ENCODE measurements at regions of chr14 and their contacts with region 1.

Region 1: DNA sequence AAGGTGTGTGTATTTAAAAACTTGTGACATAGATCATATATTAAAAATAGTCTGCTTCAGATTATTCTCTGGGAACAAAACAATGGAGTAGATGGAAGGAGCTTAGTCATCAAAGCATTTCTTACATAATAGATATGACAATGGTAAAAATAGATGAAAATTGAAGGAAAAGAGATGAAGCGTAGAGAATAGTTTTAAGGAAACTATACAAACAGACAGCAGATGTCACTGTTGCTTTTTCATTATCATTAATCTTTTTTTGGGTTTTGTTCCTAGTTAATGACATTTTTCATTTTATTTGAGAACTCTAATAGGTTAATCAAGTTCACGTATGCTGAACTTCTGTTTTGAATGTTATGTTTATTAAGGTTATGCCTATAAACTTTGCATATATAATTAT is 149.2 kb upstream of the FBXO33 start:
- DNase-seq: no peak
- ATAC-seq: peak; percentile 22; the same call in 1 of the 3 replicates
- H3K4me3 ChIP-seq: no peak overlapping the region
- H3K27ac ChIP-seq: no peak overlapping the region
- H3K4me1 ChIP-seq: no peaks in the 10 kb centered on the region
- H3K27me3 ChIP-seq: no peaks in the 10 kb centered on the region
- CTCF ChIP-seq: no peak; a peak in 1 of 6 replicates
- EP300 ChIP-seq: no peak
- POLR2A ChIP-seq: no peak
- RAD21 ChIP-seq: peak; percentile 47

Region 2: DNA sequence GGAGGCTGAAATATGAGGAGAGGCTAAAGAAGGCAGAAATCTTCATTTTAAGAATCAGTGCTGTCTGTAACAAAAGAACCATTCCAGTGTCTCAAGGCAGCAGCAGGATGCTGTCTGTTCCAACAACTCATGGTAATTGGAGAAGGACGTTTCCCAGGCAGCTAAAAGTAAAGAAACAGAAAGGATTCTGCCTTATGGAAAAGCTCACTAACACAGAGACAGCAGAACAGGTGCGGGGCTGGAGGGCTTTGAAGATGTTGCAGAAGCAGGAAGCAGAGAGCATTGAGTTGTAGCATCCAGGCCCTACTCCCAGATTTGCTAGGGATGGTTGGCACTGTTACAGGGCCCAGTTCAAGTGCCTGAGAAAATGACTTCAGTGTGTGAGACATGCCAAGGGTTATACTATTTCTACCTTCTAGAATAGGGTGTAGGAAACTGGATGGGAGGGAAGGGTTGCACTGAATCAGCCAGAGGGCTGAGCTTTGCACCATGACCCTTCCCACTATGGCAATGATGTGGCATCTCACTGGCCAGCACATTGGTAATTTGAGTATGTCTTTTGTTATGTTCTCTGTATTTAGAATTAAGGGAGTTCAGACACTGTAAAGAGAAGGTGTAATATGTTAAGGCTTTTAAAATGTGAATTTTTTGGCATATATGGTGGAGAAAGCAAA is 10.8 kb after region 1 on chr14:
- CTCF ChIA-PET with region 1: interaction called, 4 read pairs
- POLR2A ChIA-PET with region 1: no interaction called
- RAD21 ChIA-PET with region 1: no interaction called
- SMC1A ChIA-PET with region 1: interaction called, 10 read pairs
- in situ Hi-C with region 1: no loop called
- intact Hi-C with region 1: no loop called
- DNase-seq: no peak
- ATAC-seq: no peak
- H3K4me3 ChIP-seq: no peak overlapping the region
- H3K27ac ChIP-seq: no peak overlapping the region
- H3K4me1 ChIP-seq: no peaks in the 10 kb centered on the region
- H3K27me3 ChIP-seq: no peaks in the 10 kb centered on the region
- CTCF ChIP-seq: no peak
- EP300 ChIP-seq: no peak
- POLR2A ChIP-seq: no peak
- RAD21 ChIP-seq: no peak

Region 3: GRCh38 chr14:39762576-39763401 is 181.3 kb after region 1 on chr14:
- CTCF ChIA-PET with region 1: no interaction called
- POLR2A ChIA-PET with region 1: no interaction called
- RAD21 ChIA-PET with region 1: no interaction called
- SMC1A ChIA-PET with region 1: no interaction called
- in situ Hi-C with region 1: no loop called
- intact Hi-C with region 1: loop called (anchors 10 kb)
- DNase-seq: peak; percentile 59
- ATAC-seq: peak; percentile 92
- H3K4me3 ChIP-seq: peak overlapping the region; percentile 20; the same call in 1 of the 2 replicates
- H3K27ac ChIP-seq: 0 out of 2 replicates have a peak overlapping the region, but pooled peaks have one; percentile 13
- H3K4me1 ChIP-seq: peaks cover 7% of the 10 kb centered on the region
- H3K27me3 ChIP-seq: no peaks in the 10 kb centered on the region
- CTCF ChIP-seq: no peak
- EP300 ChIP-seq: peak in 1 of 2 experiments; percentile 29; a peak in 1 of 4 replicates
- POLR2A ChIP-seq: no peak
- RAD21 ChIP-seq: no peak

Region 4: GRCh38 chr14:39988939-39989338 is 407.5 kb after region 1 on chr14:
- CTCF ChIA-PET with region 1: no interaction called
- POLR2A ChIA-PET with region 1: no interaction called
- RAD21 ChIA-PET with region 1: interaction called, 3 read pairs
- SMC1A ChIA-PET with region 1: no interaction called
- in situ Hi-C with region 1: no loop called
- intact Hi-C with region 1: loop called (anchors 10 kb)
- DNase-seq: no peak
- ATAC-seq: peak; percentile 61; the same call in 2 of the 3 replicates
- H3K4me3 ChIP-seq: no peak overlapping the region
- H3K27ac ChIP-seq: no peak overlapping the region
- H3K4me1 ChIP-seq: no peaks in the 10 kb centered on the region
- H3K27me3 ChIP-seq: no peaks in the 10 kb centered on the region
- CTCF ChIP-seq: peak; percentile 24 to 62 (median 31); a peak in 4 of 6 replicates
- EP300 ChIP-seq: no peak
- POLR2A ChIP-seq: no peak
- RAD21 ChIP-seq: peak; percentile 92

Measured in GM12878 (cell line).